Common myeloid progenitor, CD34-positive (primary cell): ENCODE measurements at regions of chr1 and their contacts with region 1.

Region 1: DNA sequence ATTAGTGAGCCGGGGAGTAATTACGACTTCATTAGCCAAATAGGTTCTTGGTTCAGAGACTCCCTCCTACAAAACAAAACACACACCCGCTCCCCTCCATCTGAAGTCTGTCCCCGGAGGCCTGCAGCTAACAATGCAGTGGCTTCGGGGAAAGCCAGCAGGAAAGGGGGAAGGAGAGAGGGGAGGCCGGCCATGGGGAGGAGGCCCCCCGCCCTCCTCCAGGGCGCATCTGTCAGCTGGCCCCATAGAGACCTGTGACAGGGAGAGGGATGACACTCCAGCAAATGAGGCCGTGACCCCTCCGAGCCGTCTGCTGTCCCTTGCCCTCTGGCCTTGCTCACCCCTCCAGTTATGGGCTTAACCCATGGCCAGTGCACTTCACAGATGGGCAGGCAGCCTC is 12.1 kb upstream of the CNTN2 start:
- DNase-seq: no peak
- H3K4me3 ChIP-seq: no peak overlapping the region
- H3K27ac ChIP-seq: no peak overlapping the region
- H3K4me1 ChIP-seq: no peaks in the 10 kb centered on the region
- H3K27me3 ChIP-seq: peaks cover 0 to 9% (median 0%) of the 10 kb centered on the region in 5 experiments

Region 2: DNA sequence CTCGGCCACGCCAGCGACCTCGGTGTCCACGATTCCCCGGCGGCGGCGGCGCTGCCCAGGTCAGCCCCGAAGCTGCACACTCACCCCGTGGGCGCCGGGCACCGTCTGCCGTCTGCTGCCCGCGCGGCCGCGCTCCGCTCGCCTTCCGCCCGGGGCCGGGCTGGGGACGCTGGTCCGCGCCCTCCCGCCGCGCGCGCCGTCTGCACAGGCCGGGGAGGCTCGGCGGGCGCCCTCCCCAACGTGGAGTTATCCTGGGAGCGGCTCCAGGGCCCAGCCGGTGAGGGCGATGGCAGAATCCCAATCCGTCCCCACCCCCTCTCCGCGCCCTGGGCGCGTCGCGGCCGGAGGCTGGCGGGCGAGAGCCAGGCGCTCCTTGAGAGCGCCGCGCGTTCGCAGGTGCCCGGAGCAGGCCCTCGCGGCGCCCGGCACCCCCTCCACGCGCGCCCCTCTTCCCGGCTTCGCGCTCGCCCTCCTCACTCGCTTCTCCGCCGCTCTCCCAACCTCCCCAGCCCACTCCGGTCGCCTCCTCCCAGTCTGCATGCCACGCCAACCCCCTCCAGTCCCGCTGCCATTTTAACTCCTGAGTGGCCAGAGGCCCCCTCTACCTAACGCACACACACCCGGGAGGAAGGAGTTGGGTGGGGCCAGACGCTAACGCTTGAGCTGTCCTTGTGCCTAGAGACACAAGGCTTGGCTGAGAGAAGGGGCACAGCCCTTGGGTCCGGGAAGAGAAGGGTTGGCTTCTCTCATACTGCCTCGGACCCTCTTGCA is 345.5 kb before region 1 on chr1 and contains the start of gene LRRN2:
- CTCF ChIA-PET with region 1: no interaction called
- POLR2A ChIA-PET with region 1: no interaction called
- DNase-seq: peak in 1 of 3 donors; percentile 22
- H3K4me3 ChIP-seq: peak within 1 kb of the TSS; percentile 42 to 75 (median 62)
- H3K27ac ChIP-seq: no peak within 1 kb of the TSS
- H3K4me1 ChIP-seq: peaks cover 0 to 28% (median 27%) of the 10 kb centered on the region in 4 experiments
- H3K27me3 ChIP-seq: peaks cover 2 to 33% (median 6%) of the 10 kb centered on the region in 5 experiments

Region 3: DNA sequence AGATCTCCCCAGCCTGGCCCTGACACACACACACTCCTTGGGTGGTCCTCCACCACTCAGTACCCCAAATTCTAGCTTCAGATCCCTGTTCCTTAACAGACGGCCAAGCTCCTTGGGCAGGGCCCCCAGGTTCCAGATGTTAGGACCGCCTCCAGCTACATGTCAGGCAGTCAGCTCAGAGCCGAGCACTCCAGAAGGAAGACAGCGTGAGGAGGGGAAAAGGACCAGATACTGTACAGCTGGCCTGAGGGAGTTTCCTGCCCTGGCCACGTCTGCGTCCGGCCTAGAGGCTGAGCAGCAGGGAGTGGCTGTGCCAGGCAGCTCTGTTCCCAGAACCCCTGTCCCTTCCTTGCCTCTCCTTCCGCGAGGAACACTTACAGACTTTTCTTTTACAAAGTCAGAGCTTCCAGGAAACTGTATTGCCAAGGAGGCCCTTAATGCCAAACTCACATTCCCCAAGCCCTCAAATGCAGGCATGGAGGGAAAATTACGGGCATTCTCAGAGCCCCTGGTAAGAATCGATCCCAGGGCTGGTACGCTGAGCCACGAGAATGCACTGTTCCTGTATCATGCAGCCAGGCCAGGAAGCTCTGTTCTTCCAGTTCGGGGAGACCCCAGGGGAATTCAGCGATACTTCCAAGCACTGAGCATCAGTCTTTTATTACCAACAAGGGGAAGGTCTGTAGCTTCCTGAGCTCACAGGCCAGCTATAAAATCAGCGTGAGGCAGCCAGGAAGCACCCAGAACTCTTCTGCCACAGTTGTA is 33.1 kb before region 1 on chr1:
- CTCF ChIA-PET with region 1: interaction called, 11 read pairs
- POLR2A ChIA-PET with region 1: no interaction called
- DNase-seq: no peak
- H3K4me3 ChIP-seq: no peak overlapping the region
- H3K27ac ChIP-seq: no peak overlapping the region
- H3K4me1 ChIP-seq: peaks cover 3 to 13% (median 4%) of the 10 kb centered on the region in 4 experiments
- H3K27me3 ChIP-seq: no peaks in the 10 kb centered on the region

Region 4: DNA sequence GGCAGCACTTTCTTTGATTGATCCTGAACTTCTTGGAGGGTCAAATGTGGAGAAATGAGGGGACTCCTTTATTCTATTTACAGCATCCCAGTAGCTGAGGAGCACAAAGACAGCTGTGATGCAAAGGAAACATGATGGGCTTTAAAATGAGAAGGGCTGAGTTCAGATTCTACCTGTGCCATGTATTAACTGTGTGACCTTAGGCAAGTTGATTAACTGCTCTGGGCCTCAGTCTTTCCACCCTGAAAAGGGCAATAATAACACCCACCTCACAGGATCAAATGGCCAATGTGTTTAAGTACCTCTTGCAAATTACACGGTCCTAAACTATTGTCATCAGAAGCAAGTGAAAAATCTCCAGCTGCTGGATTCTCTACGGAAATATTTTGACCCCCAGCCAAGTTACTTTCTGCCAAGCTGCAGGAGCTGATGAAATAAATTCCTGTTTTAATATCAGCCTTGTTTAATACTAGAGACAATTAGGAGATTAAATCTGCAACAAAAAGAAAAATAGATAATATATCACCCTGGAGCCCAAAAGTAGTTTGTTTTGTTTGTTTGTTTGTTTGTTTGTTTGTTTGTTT is 37.7 kb after region 1 on chr1:
- CTCF ChIA-PET with region 1: no interaction called
- POLR2A ChIA-PET with region 1: no interaction called
- DNase-seq: no peak
- H3K4me3 ChIP-seq: no peak overlapping the region
- H3K27ac ChIP-seq: no peak overlapping the region
- H3K4me1 ChIP-seq: no peaks in the 10 kb centered on the region
- H3K27me3 ChIP-seq: no peaks in the 10 kb centered on the region